ENCODE measurements at regions of chr4 and their contacts with region 1.

Region 1: DNA sequence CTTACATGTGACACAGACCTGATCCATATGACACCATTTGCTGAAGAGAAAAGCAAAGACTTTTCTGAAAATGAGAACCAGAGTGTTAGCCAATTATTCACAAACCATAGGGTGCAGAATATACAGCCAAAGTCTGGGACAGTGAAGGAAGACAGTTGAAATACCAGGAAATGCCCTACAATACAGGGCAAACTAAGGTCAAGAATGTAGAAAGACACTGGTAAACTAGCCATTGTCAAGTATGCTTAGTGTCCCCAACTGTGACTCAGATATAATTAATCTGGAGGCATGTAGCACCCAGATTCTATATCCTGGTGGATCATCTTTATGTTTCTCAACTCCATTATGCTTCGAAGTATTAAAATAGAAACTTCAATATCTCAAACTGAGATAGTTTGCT is 200.9 kb upstream of the FSTL5 start:
- DNase-seq: no peak
- H3K4me3 ChIP-seq: no peak overlapping the region
- H3K27ac ChIP-seq: no peak overlapping the region
- H3K4me1 ChIP-seq: no peaks in the 10 kb centered on the region
- H3K27me3 ChIP-seq: no peaks in the 10 kb centered on the region
- CTCF ChIP-seq: no peak

Region 2: DNA sequence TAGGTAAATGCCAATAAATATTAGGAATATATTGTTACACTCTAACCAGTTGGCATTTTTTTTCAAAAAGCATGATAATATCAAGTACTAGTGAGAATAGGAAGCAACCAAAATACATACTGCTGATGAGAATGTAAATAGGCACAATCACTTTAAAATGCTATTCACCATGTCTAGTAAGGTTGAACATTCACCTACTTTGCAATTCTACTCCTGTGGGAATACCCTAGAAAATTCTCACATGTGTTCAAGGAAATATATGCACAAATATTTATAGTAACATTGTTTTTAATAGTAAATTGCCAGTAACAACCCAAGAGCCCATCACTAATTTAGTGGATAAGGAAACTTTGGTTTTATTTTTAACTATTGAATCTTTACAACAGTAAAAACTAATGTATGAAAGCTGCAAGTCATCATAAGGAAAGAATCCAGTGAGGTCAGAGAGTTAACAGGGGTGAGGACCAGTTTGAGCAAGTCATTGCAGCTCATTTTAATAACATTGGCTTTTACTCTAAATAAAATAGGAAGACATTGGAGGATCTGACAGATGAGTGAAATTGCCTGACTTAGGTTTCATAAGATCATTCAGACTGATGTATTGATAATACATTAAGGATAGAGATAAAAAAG is 224.5 kb before region 1 on chr4:
- intact Hi-C with region 1: loop called (anchors 10 kb)
- DNase-seq: no peak
- H3K4me3 ChIP-seq: no peak overlapping the region
- H3K27ac ChIP-seq: no peak overlapping the region
- H3K4me1 ChIP-seq: no peaks in the 10 kb centered on the region
- H3K27me3 ChIP-seq: no peaks in the 10 kb centered on the region
- CTCF ChIP-seq: no peak

Measured in colonic mucosa (tissue), 4 donors.